ENCODE measurements at regions of chr2 and their contacts with region 1.

Region 1: DNA sequence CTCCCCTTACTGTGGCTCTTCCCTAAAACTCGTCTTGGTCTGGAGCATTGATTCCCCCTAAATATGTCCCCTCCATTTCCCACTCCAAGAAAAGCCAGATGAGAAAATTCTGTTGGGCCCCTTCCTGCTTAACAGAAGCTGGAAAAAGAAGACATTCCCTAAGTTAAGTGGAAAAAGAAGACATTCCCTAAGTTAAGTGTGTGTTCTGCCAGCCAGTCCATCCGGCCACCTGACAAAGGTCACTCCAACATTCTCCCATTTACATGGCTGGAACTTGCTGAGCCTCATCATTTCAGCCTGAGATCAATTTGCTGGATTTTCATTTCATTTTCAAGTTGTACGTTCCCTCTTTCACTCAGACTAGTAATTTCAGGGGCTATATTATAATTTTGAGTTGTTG is 52.0 kb downstream of the LYPD1 start:
- DNase-seq: no peak
- H3K4me3 ChIP-seq: no peak overlapping the region
- H3K27ac ChIP-seq: no peak overlapping the region
- H3K4me1 ChIP-seq: peaks cover 0 to 4% (median 0%) of the 10 kb centered on the region in 4 donors
- H3K27me3 ChIP-seq: no peaks in the 10 kb centered on the region
- CTCF ChIP-seq: no peak
- EP300 ChIP-seq: no peak
- POLR2A ChIP-seq: no peak

Region 2: DNA sequence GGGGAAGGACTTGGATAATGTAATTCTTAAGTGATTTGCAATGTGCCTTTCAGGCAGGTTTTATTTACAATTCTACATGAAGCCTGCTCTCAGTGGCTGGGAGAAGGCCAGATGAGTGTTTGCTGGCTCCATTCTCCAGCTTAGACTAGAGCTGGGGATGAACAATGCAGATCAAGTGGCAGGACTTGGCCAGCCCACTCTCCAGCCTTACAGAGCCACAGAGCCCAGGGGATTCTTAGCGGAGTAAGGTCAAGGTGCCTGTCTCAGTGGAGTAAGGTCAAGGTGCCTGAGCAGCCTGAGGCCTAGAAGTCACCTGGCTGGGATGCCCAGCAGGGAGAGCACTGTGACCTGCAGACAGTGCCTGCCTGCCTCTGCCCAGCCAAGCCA is 35.6 kb before region 1 on chr2:
- in situ Hi-C with region 1: no loop called
- intact Hi-C with region 1: loop called (anchors 1 kb)
- DNase-seq: no peak
- H3K4me3 ChIP-seq: no peak overlapping the region
- H3K27ac ChIP-seq: no peak overlapping the region
- H3K4me1 ChIP-seq: no peaks in the 10 kb centered on the region
- H3K27me3 ChIP-seq: no peaks in the 10 kb centered on the region
- CTCF ChIP-seq: no peak
- EP300 ChIP-seq: no peak
- POLR2A ChIP-seq: no peak

Region 3: DNA sequence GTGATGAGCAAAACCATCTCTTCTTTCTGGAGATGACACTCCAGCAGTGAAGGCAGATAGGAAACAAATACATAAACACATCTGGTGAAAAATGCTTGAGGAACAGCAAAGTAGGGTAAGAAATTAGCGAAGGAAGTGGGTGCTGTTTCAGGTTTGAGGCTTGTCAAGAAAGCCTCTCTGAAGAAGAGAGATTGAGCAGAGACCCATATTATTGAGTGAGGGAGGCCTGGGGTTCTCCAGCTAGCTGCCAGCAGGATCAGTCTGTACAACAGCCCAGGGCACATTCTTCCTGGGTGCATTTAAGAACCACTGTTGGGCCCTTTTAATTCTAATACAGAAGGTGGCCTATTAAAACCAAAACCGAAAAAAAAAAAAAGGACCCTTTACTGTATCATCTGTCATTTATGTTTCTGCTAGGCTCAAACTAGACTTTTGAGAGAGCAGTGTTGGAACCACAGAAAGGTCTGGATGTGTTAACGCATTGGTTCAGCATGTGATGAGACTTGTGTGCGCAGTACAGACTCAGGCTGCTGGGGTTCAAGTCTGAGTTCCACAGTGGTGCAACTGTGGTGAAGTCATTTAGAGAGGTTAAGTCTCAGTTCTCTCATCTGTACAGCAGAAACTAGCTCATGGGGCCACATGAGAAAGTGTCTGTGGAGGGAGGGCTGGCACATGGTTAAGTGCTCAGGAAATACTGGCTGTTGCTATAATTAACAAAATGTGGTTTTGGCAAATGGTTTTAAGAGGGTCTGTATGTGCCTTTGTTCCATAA is 1664.8 kb after region 1 on chr2:
- in situ Hi-C with region 1: no loop called
- intact Hi-C with region 1: no loop called
- DNase-seq: no peak
- H3K4me3 ChIP-seq: no peak overlapping the region
- H3K27ac ChIP-seq: no peak overlapping the region
- H3K4me1 ChIP-seq: peaks cover 0 to 18% (median 0%) of the 10 kb centered on the region in 4 donors
- H3K27me3 ChIP-seq: no peaks in the 10 kb centered on the region
- CTCF ChIP-seq: no peak
- EP300 ChIP-seq: no peak
- POLR2A ChIP-seq: no peak